Heart left ventricle (tissue), 16 donors: ENCODE measurements at regions of chr17 and their contacts with region 1.

Region 1: GRCh38 chr17:57955183-57955931 is at the start of gene CUEDC1:
- DNase-seq: peak; percentile 87 to 94 (median 89)
- ATAC-seq: peak; percentile 12 to 78 (median 72)
- H3K4me3 ChIP-seq: peak within 1 kb of the TSS; percentile 64 to 99 (median 92)
- H3K27ac ChIP-seq: peak within 1 kb of the TSS; percentile 94 to 100 (median 100)
- H3K4me1 ChIP-seq: peaks cover 0 to 58% (median 43%) of the 10 kb centered on the region in 12 donors
- H3K27me3 ChIP-seq: peaks cover 0 to 4% (median 0%) of the 10 kb centered on the region in 9 donors
- CTCF ChIP-seq: peak in 10 of 12 donors; percentile 21 to 63 (median 44)
- POLR2A ChIP-seq: peak in 1 of 2 donors; percentile 34
- total RNA-seq, gene CUEDC1: 37.6 to 68.5 (median 42.8) TPM

Region 2: GRCh38 chr17:57823469-57824401 is 131.6 kb before region 1 on chr17:
- intact Hi-C with region 1: no loop called
- DNase-seq: no peak
- ATAC-seq: no peak
- H3K4me3 ChIP-seq: no peak overlapping the region
- H3K27ac ChIP-seq: no peak overlapping the region
- H3K4me1 ChIP-seq: no peaks in the 10 kb centered on the region
- H3K27me3 ChIP-seq: no peaks in the 10 kb centered on the region
- CTCF ChIP-seq: no peak
- POLR2A ChIP-seq: no peak

Region 3: DNA sequence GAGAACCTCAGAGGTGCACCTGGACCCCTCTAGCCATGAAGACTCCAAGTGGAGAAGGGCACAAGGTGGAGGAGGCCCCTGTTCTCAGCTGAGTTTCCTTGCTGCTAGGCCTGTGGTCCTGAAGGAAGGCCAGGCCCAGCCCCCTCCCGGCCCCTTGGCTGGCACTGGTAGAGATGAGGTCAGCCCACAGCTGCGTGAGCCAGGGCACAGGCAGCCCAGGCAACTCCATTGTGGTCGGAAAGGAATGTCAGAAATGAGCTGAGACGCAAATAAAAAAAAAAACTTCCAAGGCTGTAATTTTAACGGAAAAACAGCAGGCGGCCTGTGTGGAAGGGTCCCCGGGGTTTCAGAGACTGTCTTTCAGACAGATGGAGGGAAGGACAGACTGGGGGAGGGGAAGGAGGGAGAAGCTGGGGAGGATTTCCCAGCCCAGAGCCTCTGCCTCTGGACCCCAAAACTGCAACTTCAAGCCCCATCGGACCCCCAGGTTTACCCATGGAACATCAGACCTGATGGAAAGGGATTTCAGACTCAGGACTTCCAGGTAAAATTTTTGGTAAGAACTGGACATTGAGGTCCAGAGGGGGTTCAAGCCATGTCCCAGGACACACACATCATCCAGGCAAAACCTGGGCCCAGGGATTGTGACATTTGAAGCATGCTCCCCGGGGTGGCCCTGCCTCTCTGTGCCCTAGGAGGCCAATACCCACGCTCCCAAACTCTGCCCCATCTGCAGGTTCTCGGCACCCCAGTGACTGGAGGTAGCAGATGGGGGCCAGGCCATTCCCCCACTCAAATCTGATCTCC is 79.8 kb before region 1 on chr17:
- intact Hi-C with region 1: loop called in 1 of 10 experiments (anchors 5 kb)
- DNase-seq: peak; percentile 84 to 89 (median 87)
- ATAC-seq: peak; percentile 82 to 90 (median 88)
- H3K4me3 ChIP-seq: peak overlapping the region in 5 of 12 donors; percentile 6 to 39 (median 29)
- H3K27ac ChIP-seq: peak overlapping the region; percentile 56 to 93 (median 86)
- H3K4me1 ChIP-seq: peaks cover 15 to 78% (median 54%) of the 10 kb centered on the region in 12 donors
- H3K27me3 ChIP-seq: no peaks in the 10 kb centered on the region
- CTCF ChIP-seq: peak; percentile 12 to 58 (median 40)
- POLR2A ChIP-seq: no peak

Region 4: DNA sequence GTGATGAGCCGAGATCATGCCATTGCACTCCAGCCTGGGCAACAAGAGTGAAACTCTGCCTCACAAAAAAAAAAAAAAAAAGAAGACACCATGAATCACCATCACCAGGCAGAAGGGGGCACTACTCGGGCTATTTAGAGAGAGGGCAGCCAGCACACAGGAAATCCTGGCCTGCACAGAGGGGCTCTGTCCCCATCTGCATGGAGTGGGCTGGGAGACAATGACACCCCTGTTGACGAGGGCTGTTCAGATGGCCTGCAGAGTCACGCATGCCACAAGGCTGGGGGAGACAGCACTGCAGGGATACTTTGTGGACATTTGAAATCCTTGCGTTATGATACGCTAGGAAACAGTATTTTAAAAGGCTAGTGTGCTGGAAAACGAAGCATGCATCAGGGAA is 48.4 kb before region 1 on chr17:
- intact Hi-C with region 1: loop called in 5 of 10 experiments (anchors 5 kb)
- DNase-seq: peak in 1 of 5 donors; percentile 14
- ATAC-seq: no peak
- H3K4me3 ChIP-seq: no peak overlapping the region
- H3K27ac ChIP-seq: peak overlapping the region in 1 of 12 donors; percentile 45
- H3K4me1 ChIP-seq: peaks cover 4 to 73% (median 38%) of the 10 kb centered on the region in 12 donors
- H3K27me3 ChIP-seq: no peaks in the 10 kb centered on the region
- CTCF ChIP-seq: peak in 1 of 12 donors; percentile 5
- POLR2A ChIP-seq: no peak

Region 5: GRCh38 chr17:57911834-57912673 is 43.3 kb before region 1 on chr17:
- intact Hi-C with region 1: loop called in 7 of 10 experiments (anchors 5 kb)
- DNase-seq: peak; percentile 93 to 98 (median 94)
- ATAC-seq: peak; percentile 92 to 96 (median 94)
- H3K4me3 ChIP-seq: peak overlapping the region in 4 of 12 donors; percentile 13 to 21 (median 18)
- H3K27ac ChIP-seq: peak overlapping the region in 11 of 12 donors; percentile 15 to 84 (median 78)
- H3K4me1 ChIP-seq: peaks cover 7 to 73% (median 57%) of the 10 kb centered on the region in 12 donors
- H3K27me3 ChIP-seq: no peaks in the 10 kb centered on the region
- CTCF ChIP-seq: no peak
- POLR2A ChIP-seq: peak in 1 of 2 donors; percentile 12

Region 6: GRCh38 chr17:57916925-57917858 is 38.2 kb before region 1 on chr17:
- intact Hi-C with region 1: loop called in 6 of 10 experiments (anchors 5 kb)
- DNase-seq: peak in 3 of 5 donors; percentile 50 to 81 (median 55)
- ATAC-seq: peak; percentile 66 to 83 (median 76)
- H3K4me3 ChIP-seq: no peak overlapping the region
- H3K27ac ChIP-seq: peak overlapping the region in 11 of 12 donors; percentile 44 to 84 (median 78)
- H3K4me1 ChIP-seq: peaks cover 25 to 99% (median 81%) of the 10 kb centered on the region in 12 donors
- H3K27me3 ChIP-seq: no peaks in the 10 kb centered on the region
- CTCF ChIP-seq: peak in 4 of 12 donors; percentile 7 to 26 (median 14)
- POLR2A ChIP-seq: no peak

Region 7: GRCh38 chr17:57987580-57988421 is 32.4 kb after region 1 on chr17 and contains the start of gene VEZF1:
- intact Hi-C with region 1: loop called in 4 of 10 experiments (anchors 2 to 5 kb)
- DNase-seq: peak; percentile 84 to 92 (median 89)
- ATAC-seq: peak; percentile 29 to 76 (median 73)
- H3K4me3 ChIP-seq: peak within 1 kb of the TSS; percentile 60 to 92 (median 86)
- H3K27ac ChIP-seq: peak within 1 kb of the TSS; percentile 91 to 99 (median 97)
- H3K4me1 ChIP-seq: peaks cover 0 to 78% (median 50%) of the 10 kb centered on the region in 12 donors
- H3K27me3 ChIP-seq: no peaks in the 10 kb centered on the region
- CTCF ChIP-seq: no peak
- POLR2A ChIP-seq: peak in 1 of 2 donors; percentile 27
- total RNA-seq, gene VEZF1: 58.9 to 85.6 (median 62.6) TPM